RWPE1 (cell line): ENCODE measurements at regions of chr9 and their contacts with region 1.

Region 1: GRCh38 chr9:71571186-71571585 is 197.1 kb downstream of the CEMIP2 start:
- DNase-seq: no peak
- H3K27ac ChIP-seq: no peak overlapping the region
- CTCF ChIP-seq: no peak

Region 2: GRCh38 chr9:71663931-71664459 is 92.8 kb after region 1 on chr9:
- CTCF ChIA-PET with region 1: no interaction called
- POLR2A ChIA-PET with region 1: interaction called, 11 read pairs
- DNase-seq: no peak
- H3K27ac ChIP-seq: no peak overlapping the region
- CTCF ChIP-seq: no peak